PC-3 (cell line): ENCODE measurements at regions of chr11 and their contacts with region 1.

Region 1: GRCh38 chr11:34757026-34757451 is 136.1 kb downstream of the EHF start:
- DNase-seq: peak; percentile 98
- ATAC-seq: peak; percentile 94
- H3K4me3 ChIP-seq: no peak overlapping the region
- H3K27ac ChIP-seq: peak overlapping the region; percentile 98
- H3K4me1 ChIP-seq: peaks cover 28% of the 10 kb centered on the region
- H3K27me3 ChIP-seq: no peaks in the 10 kb centered on the region
- CTCF ChIP-seq: no peak

Region 2: DNA sequence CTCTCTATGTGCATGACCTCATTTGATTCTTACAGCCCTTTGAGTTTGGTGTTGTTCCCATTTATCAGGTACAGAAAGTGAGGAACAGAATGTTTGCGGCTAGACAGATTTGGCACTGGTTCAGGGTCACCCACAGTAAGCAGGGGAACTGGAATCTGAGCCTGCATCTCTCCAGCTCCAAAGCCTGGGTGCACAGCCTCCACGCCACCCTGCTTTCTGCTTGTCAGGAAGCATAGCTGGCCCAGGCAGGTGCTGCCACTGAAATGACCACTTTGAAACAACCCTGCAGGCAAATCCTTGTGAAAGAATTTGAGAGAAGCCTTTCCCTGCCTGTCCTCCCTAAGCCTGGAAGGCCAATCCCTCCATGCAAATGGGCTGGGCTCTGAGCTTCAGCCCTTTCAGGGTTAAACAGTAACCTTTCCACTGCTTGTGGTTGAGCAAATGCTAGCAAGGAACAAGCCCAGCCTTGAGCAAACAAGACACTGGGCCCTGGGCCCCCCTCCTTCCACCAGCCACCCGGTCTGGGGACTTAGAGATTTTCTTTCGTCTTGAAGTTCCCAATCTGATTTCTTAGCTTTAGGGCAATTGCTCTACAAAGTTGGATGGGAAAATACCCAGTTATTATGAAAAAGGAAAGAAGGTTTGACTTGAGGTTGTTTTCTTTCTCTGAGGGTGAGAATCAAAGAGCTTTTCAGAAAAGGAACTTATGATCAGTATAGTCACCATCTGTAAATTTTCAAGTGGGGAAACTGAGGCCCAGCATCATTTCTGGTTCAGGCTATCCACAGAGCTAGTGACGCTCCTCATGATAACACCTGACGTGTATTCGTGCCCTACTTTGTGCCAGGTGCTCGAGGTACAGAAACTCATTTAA is 116.8 kb before region 1 on chr11:
- CTCF ChIA-PET with region 1: no interaction called
- POLR2A ChIA-PET with region 1: no interaction called
- intact Hi-C with region 1: loop called (anchors 1 kb)
- DNase-seq: peak; percentile 95
- ATAC-seq: peak; percentile 85
- H3K4me3 ChIP-seq: peak overlapping the region; percentile 20; the same call in 1 of the 2 replicates
- H3K27ac ChIP-seq: peak overlapping the region; percentile 97
- H3K4me1 ChIP-seq: peaks cover 70% of the 10 kb centered on the region
- H3K27me3 ChIP-seq: no peaks in the 10 kb centered on the region
- CTCF ChIP-seq: no peak

Region 3: DNA sequence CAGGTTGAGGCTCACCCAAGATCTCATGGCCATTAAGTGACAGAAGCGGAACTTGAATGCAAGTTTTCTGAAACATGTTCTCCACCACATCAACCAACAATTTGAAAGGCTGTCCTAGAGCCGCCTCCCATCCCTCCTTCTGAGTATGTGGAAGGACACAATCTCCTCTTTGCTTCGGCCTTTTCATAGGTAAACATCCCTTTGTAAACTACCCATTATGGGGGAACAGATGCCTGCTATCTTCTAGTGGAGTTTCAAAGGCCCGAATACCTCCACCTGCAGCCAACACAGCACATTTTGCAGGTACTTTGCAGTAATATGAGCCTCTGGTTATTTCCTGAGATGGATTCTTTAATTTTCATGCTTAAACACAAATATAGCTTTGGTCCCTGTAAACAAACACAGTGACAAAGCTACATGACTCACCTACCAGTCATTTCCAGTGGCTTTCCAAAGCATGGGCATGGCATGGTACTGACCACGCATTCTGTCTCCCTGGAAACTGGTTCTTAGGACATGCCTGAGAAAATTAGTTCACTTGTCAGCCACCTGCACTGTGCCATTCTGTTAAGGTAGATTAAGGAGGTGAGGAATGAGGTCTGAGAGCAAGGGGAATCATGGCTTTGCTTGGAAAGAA is 76.0 kb before region 1 on chr11:
- CTCF ChIA-PET with region 1: no interaction called
- POLR2A ChIA-PET with region 1: no interaction called
- intact Hi-C with region 1: loop called (anchors 1 kb)
- DNase-seq: peak; percentile 97
- ATAC-seq: peak; percentile 87
- H3K4me3 ChIP-seq: no peak overlapping the region
- H3K27ac ChIP-seq: peak overlapping the region; percentile 91
- H3K4me1 ChIP-seq: peaks cover 52% of the 10 kb centered on the region
- H3K27me3 ChIP-seq: no peaks in the 10 kb centered on the region
- CTCF ChIP-seq: no peak

Region 4: DNA sequence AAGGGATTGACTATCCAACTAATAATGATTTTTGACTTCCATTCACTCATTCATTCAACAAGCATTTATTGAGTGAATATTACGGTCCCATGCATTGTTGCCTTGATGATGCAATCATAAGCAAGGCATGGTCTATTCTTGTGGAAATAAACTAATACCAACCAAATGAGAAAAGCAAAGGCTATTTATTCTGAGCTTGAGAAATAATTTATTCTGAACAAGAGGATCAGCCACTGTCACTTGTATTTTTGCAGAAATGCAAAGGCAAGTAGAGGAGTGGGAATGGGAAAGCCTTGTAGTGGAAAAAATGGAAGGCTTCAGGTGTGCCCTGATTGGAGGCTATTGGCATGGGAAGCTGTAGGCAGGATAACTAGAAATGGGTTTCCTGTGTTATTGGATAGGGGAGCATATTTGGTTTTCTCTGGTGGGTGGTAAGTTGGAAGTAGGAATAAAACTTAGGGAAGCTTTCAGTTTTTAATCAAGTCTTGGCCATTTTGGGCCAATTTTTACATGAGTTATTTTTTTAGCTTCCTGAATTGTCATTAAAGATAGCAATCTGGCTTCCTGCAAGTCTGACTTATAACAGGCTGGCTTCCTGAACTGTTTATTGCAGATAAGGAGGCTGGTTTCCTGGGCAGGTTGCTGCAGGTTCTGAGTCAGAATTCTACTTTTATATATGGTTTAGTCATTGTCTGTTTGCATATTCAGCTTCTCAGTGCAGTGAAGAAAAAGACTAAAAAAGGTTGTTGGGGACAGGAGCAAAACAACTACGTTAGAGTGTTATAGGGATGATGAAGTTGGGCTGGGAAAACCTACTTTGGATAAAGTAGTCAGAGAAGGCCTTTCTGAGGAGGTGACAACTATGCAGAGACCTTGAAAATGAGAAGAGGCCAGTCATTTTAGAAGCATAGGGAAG is 52.4 kb after region 1 on chr11:
- CTCF ChIA-PET with region 1: no interaction called
- POLR2A ChIA-PET with region 1: no interaction called
- intact Hi-C with region 1: loop called (anchors 5 kb)
- DNase-seq: peak; percentile 88
- ATAC-seq: peak; percentile 99
- H3K4me3 ChIP-seq: no peak overlapping the region
- H3K27ac ChIP-seq: peak overlapping the region; percentile 93
- H3K4me1 ChIP-seq: peaks cover 28% of the 10 kb centered on the region
- H3K27me3 ChIP-seq: no peaks in the 10 kb centered on the region
- CTCF ChIP-seq: no peak

Region 5: GRCh38 chr11:34916015-34916842 is 159.2 kb after region 1 on chr11 and contains the starts of genes APIP and PDHX:
- CTCF ChIA-PET with region 1: no interaction called
- POLR2A ChIA-PET with region 1: no interaction called
- intact Hi-C with region 1: loop called (anchors 1 kb)
- DNase-seq: peak; percentile 98
- ATAC-seq: peak; percentile 91
- H3K4me3 ChIP-seq: peak within 1 kb of the TSS; percentile 96
- H3K27ac ChIP-seq: peak within 1 kb of the TSS; percentile 80
- H3K4me1 ChIP-seq: peaks cover 19% of the 10 kb centered on the region
- H3K27me3 ChIP-seq: no peaks in the 10 kb centered on the region
- CTCF ChIP-seq: no peak
- total RNA-seq, gene APIP: 30.5 and 35.3 TPM in 2 replicates
- total RNA-seq, gene PDHX: 20.3 and 22.7 TPM in 2 replicates